ENCODE measurements at regions of chr11 and their contacts with region 1.

Region 1: GRCh38 chr11:75547580-75548058 is 14.4 kb upstream of the SERPINH1 start:
- DNase-seq: peak; percentile 81 to 84
- H3K4me3 ChIP-seq: no peak overlapping the region
- H3K27ac ChIP-seq: no peak overlapping the region
- H3K4me1 ChIP-seq: peaks cover 0 to 4% of the 10 kb centered on the region in 2 donors
- H3K27me3 ChIP-seq: no peaks in the 10 kb centered on the region
- CTCF ChIP-seq: peak; percentile 60 to 90 (median 89)
- POLR2A ChIP-seq: no peak

Region 2: DNA sequence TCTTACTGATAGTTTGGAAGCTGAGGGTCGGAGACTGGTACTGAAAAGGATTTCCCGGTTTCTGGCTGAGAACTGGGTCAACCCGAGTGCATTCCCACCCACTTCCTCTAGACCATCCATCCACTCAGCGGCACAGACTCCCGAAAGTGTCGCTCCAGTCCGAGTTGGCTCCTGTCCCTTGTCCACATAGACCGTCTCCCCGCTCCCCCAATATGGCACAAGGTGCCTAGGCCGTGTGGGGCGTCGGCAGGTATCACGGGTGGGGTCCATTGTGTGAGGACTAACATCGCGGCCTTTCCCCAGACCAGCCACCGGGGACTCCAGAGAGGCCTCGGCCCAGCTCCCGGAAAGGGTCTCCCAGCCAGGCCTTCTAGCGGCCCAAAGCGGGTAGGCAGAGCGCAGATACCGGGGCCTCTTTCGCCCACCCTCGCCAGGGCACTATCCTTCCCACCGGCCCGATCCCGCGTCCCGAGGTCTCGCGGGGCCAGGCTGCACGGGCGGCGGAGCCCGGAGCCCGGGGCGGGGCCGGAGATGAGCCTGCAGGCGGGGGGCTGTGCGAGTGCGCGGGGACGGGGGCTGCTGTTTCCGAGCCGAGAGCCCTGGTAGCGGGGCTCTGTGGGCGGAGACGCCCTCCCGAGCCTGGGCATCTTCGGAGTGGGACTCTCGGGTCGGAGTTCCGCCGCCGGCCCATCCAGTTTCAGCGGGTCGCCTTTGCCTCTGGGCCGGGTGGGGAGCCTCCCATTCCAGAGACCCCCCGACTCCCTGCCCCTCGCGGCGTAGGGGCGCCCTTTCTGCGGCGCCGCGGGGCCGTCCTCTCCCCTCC is 35.5 kb after region 1 on chr11:
- intact Hi-C with region 1: loop called (anchors 5 kb)
- DNase-seq: peak; percentile 63 to 72
- H3K4me3 ChIP-seq: peak overlapping the region; percentile 38 to 74 (median 62)
- H3K27ac ChIP-seq: peak overlapping the region; percentile 97 to 99 (median 98)
- H3K4me1 ChIP-seq: peaks cover 29 to 49% of the 10 kb centered on the region in 2 donors
- H3K27me3 ChIP-seq: no peaks in the 10 kb centered on the region
- CTCF ChIP-seq: peak in 3 of 6 experiments; percentile 14 to 37 (median 34)
- POLR2A ChIP-seq: peak; percentile 12 to 64

Region 3: DNA sequence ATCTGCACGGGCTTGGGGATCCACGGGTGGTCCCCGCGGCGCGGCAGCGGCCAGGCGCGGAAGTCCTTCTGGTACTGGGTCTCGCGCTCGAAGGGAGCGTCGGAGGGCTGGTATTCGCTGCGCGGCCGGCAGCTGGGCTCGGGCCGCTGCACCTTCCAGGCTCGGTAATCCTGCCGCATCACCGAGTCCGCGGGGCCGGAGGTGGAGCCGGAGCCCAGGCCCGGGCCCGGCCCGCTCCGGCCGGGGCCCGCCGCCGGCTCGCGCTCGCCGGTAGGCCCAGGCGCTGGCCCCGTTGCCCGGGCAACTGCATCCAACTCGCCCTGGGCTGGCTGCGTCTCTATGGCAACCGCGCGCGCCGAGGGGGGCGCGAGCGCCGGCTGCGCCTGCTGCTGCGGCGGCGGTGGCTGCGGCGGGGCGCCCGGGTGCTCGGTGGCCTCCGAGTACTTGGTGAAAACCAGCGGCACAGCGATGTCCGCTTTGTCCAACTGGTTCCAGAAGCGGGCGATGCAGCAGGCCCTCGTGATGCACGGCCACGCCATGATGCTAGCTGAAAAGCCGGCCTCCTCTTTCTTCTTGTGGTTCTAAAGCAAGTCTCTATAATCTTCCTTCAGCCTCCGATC is 120.3 kb after region 1 on chr11:
- intact Hi-C with region 1: loop called (anchors 5 kb)
- DNase-seq: peak; percentile 66
- H3K4me3 ChIP-seq: peak overlapping the region; percentile 25 to 59 (median 49)
- H3K27ac ChIP-seq: peak overlapping the region in 2 of 3 donors; percentile 55 to 63
- H3K4me1 ChIP-seq: peaks cover 8 to 15% of the 10 kb centered on the region in 2 donors
- H3K27me3 ChIP-seq: no peaks in the 10 kb centered on the region
- CTCF ChIP-seq: no peak
- POLR2A ChIP-seq: no peak

Region 4: DNA sequence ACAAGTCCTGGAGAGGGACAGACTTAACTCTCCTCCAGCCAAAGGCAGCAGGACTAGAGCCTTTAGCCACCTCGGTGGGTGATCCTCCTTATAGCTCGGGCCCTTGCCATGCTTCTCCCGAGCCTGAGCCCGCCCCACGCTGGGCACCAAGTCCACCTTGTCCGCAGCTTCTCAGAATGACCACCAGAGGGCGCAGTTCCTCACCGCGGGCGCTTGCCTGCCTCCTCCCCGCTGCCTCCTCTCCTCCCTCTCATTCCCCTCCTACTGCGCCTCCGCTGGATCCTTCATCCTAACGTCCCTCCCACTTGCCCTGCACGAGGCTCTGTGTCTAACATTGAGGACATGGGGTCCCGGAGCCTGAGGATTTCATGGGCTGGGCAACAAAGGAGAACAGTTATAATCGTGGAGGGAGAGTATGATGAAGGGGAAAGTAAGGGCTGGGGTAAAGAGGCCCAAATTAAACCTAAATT is 158.7 kb after region 1 on chr11:
- intact Hi-C with region 1: loop called (anchors 5 kb)
- DNase-seq: peak; percentile 61 to 69
- H3K4me3 ChIP-seq: no peak overlapping the region
- H3K27ac ChIP-seq: no peak overlapping the region
- H3K4me1 ChIP-seq: peaks cover 0 to 7% of the 10 kb centered on the region in 2 donors
- H3K27me3 ChIP-seq: no peaks in the 10 kb centered on the region
- CTCF ChIP-seq: peak; percentile 76 to 97 (median 88)
- POLR2A ChIP-seq: no peak

Region 5: GRCh38 chr11:75768112-75768908 is 220.7 kb after region 1 on chr11 and contains the start of gene DGAT2:
- intact Hi-C with region 1: loop called (anchors 10 kb)
- DNase-seq: peak; percentile 82 to 84
- H3K4me3 ChIP-seq: peak within 1 kb of the TSS; percentile 11 to 37 (median 19)
- H3K27ac ChIP-seq: peak within 1 kb of the TSS in 2 of 3 donors; percentile 37 to 44
- H3K4me1 ChIP-seq: peaks cover 15 to 53% of the 10 kb centered on the region in 2 donors
- H3K27me3 ChIP-seq: no peaks in the 10 kb centered on the region
- CTCF ChIP-seq: peak in 3 of 6 experiments; percentile 25 to 39 (median 32)
- POLR2A ChIP-seq: peak in 1 of 2 donors; percentile 66
- total RNA-seq, gene DGAT2: 9.9 to 20.7 (median 16.3) TPM